Activated naive CD4-positive, alpha-beta T cell treated with anti-CD3 and anti-CD28 coated beads, Interleukin-2, amount 10 ng/mL, durations not matched to agents 7 days and 5 days (primary cell): ENCODE measurements at regions of chr14 and their contacts with region 1.

Region 1: GRCh38 chr14:95527387-95528002 is 7.4 kb upstream of the GLRX5 start:
- DNase-seq: peak; percentile 69
- H3K4me3 Mint-ChIP-seq: no peak overlapping the region
- H3K27ac Mint-ChIP-seq: peak overlapping the region; percentile 59
- H3K4me1 Mint-ChIP-seq: peaks cover 80% of the 10 kb centered on the region
- H3K27me3 Mint-ChIP-seq: no peaks in the 10 kb centered on the region

Region 2: GRCh38 chr14:95428557-95428956 is 98.9 kb before region 1 on chr14:
- CTCF ChIA-PET with region 1: interaction called, 15 read pairs
- DNase-seq: no peak
- H3K4me3 Mint-ChIP-seq: no peak overlapping the region
- H3K27ac Mint-ChIP-seq: no peak overlapping the region
- H3K4me1 Mint-ChIP-seq: no peaks in the 10 kb centered on the region
- H3K27me3 Mint-ChIP-seq: no peaks in the 10 kb centered on the region

Region 3: GRCh38 chr14:95442633-95443021 is 84.9 kb before region 1 on chr14:
- CTCF ChIA-PET with region 1: interaction called, 30 read pairs
- DNase-seq: peak; percentile 84
- H3K4me3 Mint-ChIP-seq: no peak overlapping the region
- H3K27ac Mint-ChIP-seq: peak overlapping the region; percentile 35
- H3K4me1 Mint-ChIP-seq: peaks cover 7% of the 10 kb centered on the region
- H3K27me3 Mint-ChIP-seq: no peaks in the 10 kb centered on the region

Region 4: GRCh38 chr14:95452176-95452892 is 75.2 kb before region 1 on chr14:
- CTCF ChIA-PET with region 1: interaction called, 16 read pairs
- DNase-seq: peak; percentile 33
- H3K4me3 Mint-ChIP-seq: no peak overlapping the region
- H3K27ac Mint-ChIP-seq: no peak overlapping the region
- H3K4me1 Mint-ChIP-seq: no peaks in the 10 kb centered on the region
- H3K27me3 Mint-ChIP-seq: no peaks in the 10 kb centered on the region

Region 5: GRCh38 chr14:95480109-95480886 is 47.2 kb before region 1 on chr14:
- CTCF ChIA-PET with region 1: interaction called, 11 read pairs
- DNase-seq: no peak
- H3K4me3 Mint-ChIP-seq: no peak overlapping the region
- H3K27ac Mint-ChIP-seq: peak overlapping the region; percentile 78
- H3K4me1 Mint-ChIP-seq: peaks cover 22% of the 10 kb centered on the region
- H3K27me3 Mint-ChIP-seq: no peaks in the 10 kb centered on the region

Region 6: GRCh38 chr14:95495538-95496025 is 31.9 kb before region 1 on chr14:
- CTCF ChIA-PET with region 1: interaction called, 30 read pairs
- DNase-seq: peak; percentile 21
- H3K4me3 Mint-ChIP-seq: no peak overlapping the region
- H3K27ac Mint-ChIP-seq: peak overlapping the region; percentile 43
- H3K4me1 Mint-ChIP-seq: peaks cover 65% of the 10 kb centered on the region
- H3K27me3 Mint-ChIP-seq: no peaks in the 10 kb centered on the region

Region 7: DNA sequence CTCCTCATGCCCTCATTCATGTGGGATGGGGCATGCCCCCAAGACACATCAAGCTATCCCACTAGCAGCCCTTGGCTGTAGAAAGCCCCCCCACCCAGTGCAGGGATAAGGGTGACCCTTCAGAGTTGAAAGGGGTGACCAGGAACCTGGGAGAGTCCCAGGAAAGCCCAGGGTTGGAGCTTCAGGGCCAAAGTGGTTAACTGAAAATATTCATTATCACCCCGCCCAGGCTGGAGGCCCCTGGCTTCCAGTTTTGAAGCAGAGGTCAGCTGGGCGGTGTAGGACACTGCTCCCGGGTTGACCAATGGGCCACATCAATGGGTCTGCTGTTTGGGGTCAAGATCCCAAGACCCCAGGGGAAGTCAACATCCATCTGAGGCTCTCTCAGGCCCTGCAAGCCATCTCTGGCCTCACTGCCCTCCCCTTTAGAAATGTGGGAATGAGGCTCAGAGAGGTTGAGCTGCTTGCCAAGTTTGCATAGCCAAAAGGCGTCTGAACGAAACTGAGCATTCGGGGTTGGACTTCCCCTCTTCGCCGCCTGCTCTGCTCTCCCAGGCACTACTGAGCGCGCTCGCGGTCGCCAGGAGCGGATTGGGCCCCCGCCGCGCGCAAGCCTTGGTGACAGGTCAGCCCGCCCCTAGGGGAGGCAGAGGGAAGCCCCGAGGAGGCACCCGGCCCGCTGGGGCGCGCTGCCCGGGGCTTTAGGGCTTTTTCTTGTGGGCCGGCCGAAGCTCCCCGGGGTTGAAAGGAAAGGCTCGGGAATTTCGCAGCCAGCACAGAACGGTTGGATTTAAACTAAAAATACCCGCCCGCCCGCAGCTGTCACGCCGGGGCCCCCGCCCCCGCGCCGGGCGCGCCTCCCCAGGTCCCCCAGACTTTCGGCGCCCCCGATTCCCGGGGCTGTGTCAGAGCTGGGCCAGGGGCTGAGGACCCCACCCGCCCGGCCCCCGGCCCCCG is 11.6 kb before region 1 on chr14:
- CTCF ChIA-PET with region 1: interaction called, 41 read pairs
- DNase-seq: peak; percentile 89
- H3K4me3 Mint-ChIP-seq: peak overlapping the region; percentile 92
- H3K27ac Mint-ChIP-seq: peak overlapping the region; percentile 87
- H3K4me1 Mint-ChIP-seq: peaks cover 75% of the 10 kb centered on the region
- H3K27me3 Mint-ChIP-seq: no peaks in the 10 kb centered on the region